ENCODE measurements at regions of chr10 and their contacts with region 1.

Region 1: GRCh38 chr10:17200912-17201793 is at the start of gene TRDMT1:
- DNase-seq: peak; percentile 89
- H3K4me3 Mint-ChIP-seq: peak within 1 kb of the TSS; percentile 90
- H3K27ac Mint-ChIP-seq: peak within 1 kb of the TSS; percentile 88
- H3K4me1 Mint-ChIP-seq: peaks cover 29% of the 10 kb centered on the region
- H3K27me3 Mint-ChIP-seq: no peaks in the 10 kb centered on the region
- CTCF ChIP-seq: no peak
- total RNA-seq, gene TRDMT1: 5.4 and 8.7 TPM in 2 replicates

Region 2: DNA sequence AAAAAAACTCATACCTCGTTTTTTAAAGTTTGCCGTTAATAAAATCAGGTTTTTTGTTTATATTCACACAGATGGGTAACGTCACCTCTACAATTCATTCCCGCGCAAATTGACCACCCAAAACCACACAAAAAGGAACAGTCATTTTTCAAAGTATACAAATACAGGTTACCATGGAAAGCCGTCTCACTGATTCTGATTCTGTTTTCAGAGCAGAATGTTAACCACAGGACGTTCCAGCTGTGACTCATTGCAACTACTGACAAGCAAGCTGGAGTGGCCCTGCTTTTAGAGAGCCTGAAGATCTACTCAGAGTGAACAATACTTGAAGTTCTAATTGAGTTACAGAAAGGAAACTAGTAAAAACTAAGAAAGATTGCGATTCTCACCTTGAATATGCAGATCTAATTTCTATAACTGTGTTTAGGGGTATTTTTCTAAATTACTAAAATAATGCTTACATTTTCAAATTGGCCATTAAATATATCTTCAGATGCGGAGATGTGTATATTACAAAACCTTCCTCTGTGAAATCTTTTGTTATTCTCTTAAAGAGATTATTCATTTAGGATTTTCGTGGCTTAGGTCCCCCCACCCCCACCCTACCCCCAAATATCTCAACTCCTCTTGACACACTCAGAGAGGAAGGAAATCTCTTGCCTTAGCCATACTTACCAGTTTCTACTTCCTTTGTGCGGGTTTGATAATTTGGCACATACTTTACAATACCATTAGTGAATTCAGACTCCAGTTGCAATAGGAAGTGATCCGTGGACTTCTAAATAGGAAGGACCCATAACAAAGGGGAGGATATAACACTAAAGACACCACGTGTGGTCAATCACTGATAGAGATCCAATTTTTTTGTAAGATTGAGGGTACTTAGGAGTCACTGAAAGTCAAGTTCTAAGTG is 177.5 kb before region 1 on chr10:
- CTCF ChIA-PET with region 1: no interaction called
- POLR2A ChIA-PET with region 1: interaction called, 4 read pairs
- intact Hi-C with region 1: loop called (anchors 1 kb)
- DNase-seq: peak; percentile 90
- H3K4me3 Mint-ChIP-seq: peak overlapping the region; percentile 67
- H3K27ac Mint-ChIP-seq: peak overlapping the region; percentile 98
- H3K4me1 Mint-ChIP-seq: peaks cover 28% of the 10 kb centered on the region
- H3K27me3 Mint-ChIP-seq: no peaks in the 10 kb centered on the region
- CTCF ChIP-seq: no peak

Region 3: GRCh38 chr10:17188644-17189172 is 12.4 kb before region 1 on chr10:
- CTCF ChIA-PET with region 1: interaction called, 3 read pairs
- POLR2A ChIA-PET with region 1: interaction called, 22 read pairs
- intact Hi-C with region 1: no loop called
- DNase-seq: no peak
- H3K4me3 Mint-ChIP-seq: no peak overlapping the region
- H3K27ac Mint-ChIP-seq: no peak overlapping the region
- H3K4me1 Mint-ChIP-seq: peaks cover 4% of the 10 kb centered on the region
- H3K27me3 Mint-ChIP-seq: no peaks in the 10 kb centered on the region
- CTCF ChIP-seq: no peak

Region 4: GRCh38 chr10:17216217-17216900 is 15.2 kb after region 1 on chr10:
- CTCF ChIA-PET with region 1: interaction called, 15 read pairs
- POLR2A ChIA-PET with region 1: interaction called, 38 read pairs
- intact Hi-C with region 1: loop called (anchors 1 kb)
- DNase-seq: peak; percentile 87
- H3K4me3 Mint-ChIP-seq: peak overlapping the region; percentile 19
- H3K27ac Mint-ChIP-seq: peak overlapping the region; percentile 95
- H3K4me1 Mint-ChIP-seq: peaks cover 28% of the 10 kb centered on the region
- H3K27me3 Mint-ChIP-seq: no peaks in the 10 kb centered on the region
- CTCF ChIP-seq: no peak

Region 5: DNA sequence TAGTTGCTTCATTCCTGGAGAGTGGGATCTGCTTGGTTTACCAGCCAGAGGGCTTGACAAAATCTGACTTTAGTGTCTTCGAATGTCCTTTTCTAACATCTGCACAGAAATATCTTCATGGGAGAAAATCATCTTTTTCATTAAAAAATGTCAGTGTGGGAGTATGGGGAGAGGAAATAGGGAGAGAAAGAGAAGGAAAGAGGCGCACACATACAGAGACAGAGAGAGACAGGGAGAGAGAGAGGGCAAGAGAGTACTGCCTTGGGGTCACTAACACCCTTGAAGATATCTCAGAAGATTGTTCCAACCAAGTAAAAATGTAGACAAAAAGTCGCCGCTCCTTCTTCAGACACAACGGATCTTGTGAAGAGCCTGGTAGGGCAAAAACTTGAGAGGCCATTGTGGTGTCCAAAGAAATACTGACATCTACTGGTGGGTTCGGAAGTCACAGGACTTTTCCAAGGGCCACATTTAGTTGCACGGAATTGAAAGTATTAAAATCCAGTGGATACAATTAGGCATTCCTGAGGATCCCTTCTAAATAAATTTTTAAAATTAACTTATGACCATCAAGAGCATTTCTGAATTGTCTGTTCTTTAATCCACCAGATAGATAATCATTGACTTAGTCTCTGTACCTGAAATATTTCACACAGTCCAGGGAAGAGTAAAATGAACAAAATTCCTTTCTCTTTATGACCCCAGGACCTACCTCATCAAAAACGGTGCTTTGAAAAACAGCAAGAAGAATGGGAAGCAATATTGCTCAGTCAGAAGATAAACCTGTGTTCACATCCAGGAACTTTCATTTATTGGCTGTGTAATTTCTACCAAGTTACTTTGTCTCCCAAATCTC is 56.5 kb after region 1 on chr10:
- CTCF ChIA-PET with region 1: interaction called, 4 read pairs
- POLR2A ChIA-PET with region 1: interaction called, 4 read pairs
- intact Hi-C with region 1: loop called (anchors 2 kb)
- DNase-seq: peak; percentile 78
- H3K4me3 Mint-ChIP-seq: peak overlapping the region; percentile 56
- H3K27ac Mint-ChIP-seq: no peak overlapping the region
- H3K4me1 Mint-ChIP-seq: peaks cover 6% of the 10 kb centered on the region
- H3K27me3 Mint-ChIP-seq: no peaks in the 10 kb centered on the region
- CTCF ChIP-seq: peak; percentile 68

Region 6: DNA sequence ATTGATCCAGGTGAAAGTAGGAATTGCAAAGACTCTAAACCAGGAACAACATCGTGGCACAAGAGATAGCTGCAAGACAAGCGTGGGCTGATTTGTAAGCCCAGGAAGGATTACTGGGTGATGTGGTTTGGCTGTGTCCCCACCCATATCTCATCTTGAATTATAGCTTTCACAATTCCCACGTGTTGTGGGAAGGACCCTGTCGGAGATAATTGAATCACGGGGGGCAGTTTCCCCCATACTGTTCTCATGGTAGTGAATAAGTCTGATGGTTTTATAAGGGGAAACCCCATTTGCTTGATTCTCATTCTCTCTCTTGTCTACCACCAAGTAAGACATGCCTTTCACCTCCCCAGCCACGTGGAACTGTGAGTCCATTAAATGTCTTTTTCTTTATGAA is 193.7 kb after region 1 on chr10:
- CTCF ChIA-PET with region 1: no interaction called
- POLR2A ChIA-PET with region 1: no interaction called
- intact Hi-C with region 1: no loop called
- DNase-seq: no peak
- H3K4me3 Mint-ChIP-seq: no peak overlapping the region
- H3K27ac Mint-ChIP-seq: no peak overlapping the region
- H3K4me1 Mint-ChIP-seq: no peaks in the 10 kb centered on the region
- H3K27me3 Mint-ChIP-seq: no peaks in the 10 kb centered on the region
- CTCF ChIP-seq: no peak